ENCODE measurements at regions of chr1 and their contacts with region 1.

Region 1: DNA sequence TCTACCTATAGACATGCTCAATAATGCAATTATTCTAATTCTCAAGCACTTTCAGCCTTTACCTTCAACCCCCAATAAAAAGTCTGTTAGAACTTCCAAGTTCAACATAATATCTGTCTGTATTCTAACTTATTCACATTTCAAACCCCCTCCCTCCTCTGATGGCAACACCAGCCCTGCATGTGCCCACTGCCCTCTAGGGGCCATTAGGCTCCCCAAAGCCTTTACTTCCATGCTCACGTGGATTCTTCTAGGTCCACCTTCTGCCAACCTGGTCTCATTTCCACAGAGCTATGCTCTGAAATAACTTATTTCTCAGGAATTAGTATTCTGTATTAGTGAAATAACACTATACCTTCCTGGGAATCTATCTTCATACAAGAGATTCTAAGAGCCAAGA is 22.2 kb upstream of the KPRP start:
- DNase-seq: peak; percentile 4
- ATAC-seq: peak; percentile 80
- H3K4me3 ChIP-seq: no peak overlapping the region
- H3K27ac ChIP-seq: no peak overlapping the region
- H3K4me1 ChIP-seq: no peaks in the 10 kb centered on the region
- H3K27me3 ChIP-seq: no peaks in the 10 kb centered on the region
- CTCF ChIP-seq: peak; percentile 49
- EP300 ChIP-seq: no peak
- POLR2A ChIP-seq: no peak
- RAD21 ChIP-seq: no peak

Region 2: GRCh38 chr1:152596986-152597385 is 138.7 kb before region 1 on chr1:
- CTCF ChIA-PET with region 1: no interaction called
- POLR2A ChIA-PET with region 1: no interaction called
- in situ Hi-C with region 1: no loop called
- intact Hi-C with region 1: no loop called
- DNase-seq: peak; percentile 55
- ATAC-seq: peak; percentile 35; the same call in 1 of the 3 replicates
- H3K4me3 ChIP-seq: no peak overlapping the region
- H3K27ac ChIP-seq: no peak overlapping the region
- H3K4me1 ChIP-seq: 0 out of 2 replicates have a peak, but pooled peaks cover 5% of the 10 kb centered on the region
- H3K27me3 ChIP-seq: no peaks in the 10 kb centered on the region
- CTCF ChIP-seq: no peak
- EP300 ChIP-seq: no peak
- POLR2A ChIP-seq: no peak
- RAD21 ChIP-seq: no peak

Region 3: DNA sequence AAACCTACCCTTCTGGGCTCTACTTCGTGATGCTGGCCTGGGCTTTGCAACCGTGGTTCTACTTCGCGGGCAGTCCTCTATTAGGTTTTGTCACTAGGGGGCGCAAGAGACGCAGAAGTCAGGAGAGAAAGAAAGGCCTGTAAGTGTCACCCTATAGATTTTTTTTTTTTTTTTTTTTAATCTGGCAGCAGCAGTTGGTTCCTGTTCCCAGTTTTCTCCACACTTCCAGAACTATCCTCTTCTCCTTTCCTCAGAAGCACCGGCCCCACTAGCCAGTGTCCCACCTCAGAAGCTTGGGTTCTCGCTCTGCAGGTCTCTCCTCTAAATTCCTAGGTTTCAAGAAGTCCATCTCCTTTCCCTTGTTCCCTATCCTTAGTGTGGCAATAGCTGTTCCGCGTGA is 81.5 kb before region 1 on chr1:
- CTCF ChIA-PET with region 1: interaction called, 4 read pairs
- POLR2A ChIA-PET with region 1: no interaction called
- in situ Hi-C with region 1: no loop called
- intact Hi-C with region 1: loop called (anchors 1 kb)
- DNase-seq: peak; percentile 59
- ATAC-seq: peak; percentile 82
- H3K4me3 ChIP-seq: no peak overlapping the region
- H3K27ac ChIP-seq: no peak overlapping the region
- H3K4me1 ChIP-seq: no peaks in the 10 kb centered on the region
- H3K27me3 ChIP-seq: no peaks in the 10 kb centered on the region
- CTCF ChIP-seq: peak; percentile 72
- EP300 ChIP-seq: no peak
- POLR2A ChIP-seq: no peak
- RAD21 ChIP-seq: peak; percentile 11; the same call in 1 of the 2 replicates

Region 4: GRCh38 chr1:152697701-152698600 is 37.7 kb before region 1 on chr1 and contains the start of gene LCE2A:
- CTCF ChIA-PET with region 1: no interaction called
- POLR2A ChIA-PET with region 1: no interaction called
- in situ Hi-C with region 1: no loop called
- intact Hi-C with region 1: no loop called
- DNase-seq: no peak
- ATAC-seq: no peak
- H3K4me3 ChIP-seq: no peak within 1 kb of the TSS
- H3K27ac ChIP-seq: no peak within 1 kb of the TSS
- H3K4me1 ChIP-seq: no peaks in the 10 kb centered on the region
- H3K27me3 ChIP-seq: no peaks in the 10 kb centered on the region; a peak in 1 of 5 replicates
- CTCF ChIP-seq: no peak
- EP300 ChIP-seq: no peak
- POLR2A ChIP-seq: no peak
- RAD21 ChIP-seq: no peak
- total RNA-seq, gene LCE2A: not detected in 2 replicates

Region 5: GRCh38 chr1:152777525-152778137 is 42.0 kb after region 1 on chr1:
- CTCF ChIA-PET with region 1: no interaction called
- POLR2A ChIA-PET with region 1: no interaction called
- in situ Hi-C with region 1: no loop called
- intact Hi-C with region 1: no loop called
- DNase-seq: peak; percentile 30
- ATAC-seq: no peak
- H3K4me3 ChIP-seq: no peak overlapping the region
- H3K27ac ChIP-seq: no peak overlapping the region
- H3K4me1 ChIP-seq: no peaks in the 10 kb centered on the region
- H3K27me3 ChIP-seq: no peaks in the 10 kb centered on the region
- CTCF ChIP-seq: peak; percentile 38
- EP300 ChIP-seq: no peak
- POLR2A ChIP-seq: no peak
- RAD21 ChIP-seq: no peak

Region 6: DNA sequence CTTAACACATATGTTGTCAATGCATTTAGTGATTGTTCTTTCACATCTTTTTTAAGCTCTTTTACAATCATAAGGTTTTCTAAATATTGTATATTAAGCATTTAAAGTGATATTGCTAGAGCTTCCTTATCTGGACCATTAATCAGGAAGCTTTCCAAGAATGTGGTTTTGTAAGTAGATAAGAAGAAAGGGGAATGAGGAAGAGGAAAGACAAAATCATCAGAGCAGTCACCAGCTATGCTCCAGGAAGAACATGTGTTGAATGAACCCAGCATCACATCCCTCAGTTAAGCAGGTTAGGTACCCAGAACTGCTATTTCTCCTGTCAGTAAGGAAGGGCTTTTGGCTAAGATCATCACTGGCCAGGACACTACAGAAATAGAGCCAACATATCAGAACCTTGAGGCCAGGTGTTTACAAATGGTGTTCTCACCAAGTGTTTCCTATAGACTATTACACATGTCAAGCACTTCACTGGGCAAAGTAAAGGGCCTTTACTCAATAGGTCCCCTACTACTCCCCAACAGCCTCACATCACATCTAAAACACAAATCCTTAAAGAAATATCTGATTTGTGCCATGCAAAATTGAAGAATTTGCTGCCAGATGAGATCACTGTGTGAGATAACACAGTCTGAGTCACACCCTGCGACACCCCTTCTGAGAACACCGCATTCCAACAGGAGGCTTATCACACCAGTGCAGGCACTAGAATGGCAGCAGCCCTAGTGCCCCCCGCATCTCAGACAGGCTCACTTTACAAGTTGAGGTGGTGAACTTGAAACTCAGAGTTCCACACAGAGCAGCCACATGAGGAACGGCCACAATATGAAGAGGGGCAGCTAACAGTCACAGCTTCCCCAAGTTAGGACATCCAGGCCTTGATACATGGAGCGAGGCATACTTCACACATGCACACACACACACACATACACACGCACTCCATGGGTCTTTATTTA is 323.5 kb after region 1 on chr1:
- CTCF ChIA-PET with region 1: no interaction called
- POLR2A ChIA-PET with region 1: no interaction called
- in situ Hi-C with region 1: no loop called
- intact Hi-C with region 1: no loop called
- DNase-seq: no peak
- ATAC-seq: no peak
- H3K4me3 ChIP-seq: no peak overlapping the region
- H3K27ac ChIP-seq: no peak overlapping the region
- H3K4me1 ChIP-seq: no peaks in the 10 kb centered on the region
- H3K27me3 ChIP-seq: no peaks in the 10 kb centered on the region
- CTCF ChIP-seq: no peak
- EP300 ChIP-seq: no peak
- POLR2A ChIP-seq: no peak
- RAD21 ChIP-seq: no peak